Endothelial cell of umbilical vein (primary cell): ENCODE measurements at regions of chr15 and their contacts with region 1.

Region 1: DNA sequence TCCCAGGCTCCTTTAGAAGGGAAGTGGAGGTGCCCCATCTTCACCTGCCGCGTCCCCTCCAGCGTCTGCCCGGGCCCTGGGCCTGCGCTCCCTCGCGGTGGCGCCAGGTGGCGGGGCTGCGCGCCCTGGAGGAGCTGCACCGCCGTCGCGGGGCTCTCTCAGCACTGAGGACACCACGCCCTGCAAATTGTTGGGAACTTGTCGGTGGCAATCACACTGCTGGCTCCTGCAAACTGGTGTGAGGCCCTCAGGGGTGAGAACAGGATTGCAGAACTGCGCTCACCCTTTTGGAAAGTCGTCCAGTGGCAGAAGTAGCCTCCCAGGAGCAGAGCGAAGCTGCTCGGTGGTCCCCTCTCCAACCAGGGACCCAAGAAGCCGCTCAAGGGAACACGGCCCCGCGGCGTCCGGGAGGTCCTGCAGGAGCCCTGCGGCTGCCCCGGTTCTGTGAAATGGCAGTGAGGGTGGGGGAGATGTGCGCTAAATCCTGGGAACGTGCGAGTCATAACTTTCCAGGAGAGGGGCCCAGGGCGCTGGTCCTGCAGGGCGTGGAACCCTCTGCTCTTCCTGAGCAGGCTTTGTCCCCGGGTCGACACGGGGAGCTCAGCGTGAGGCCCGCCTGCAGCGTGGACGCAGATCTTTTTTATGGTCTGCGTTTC is 995 bp upstream of the LRRK1 start:
- DNase-seq: peak; percentile 78
- H3K4me3 ChIP-seq: peak overlapping the region; percentile 50 to 60 (median 58)
- H3K27ac ChIP-seq: peak overlapping the region; percentile 44
- H3K4me1 ChIP-seq: peaks cover 14% of the 10 kb centered on the region
- H3K27me3 ChIP-seq: no peaks in the 10 kb centered on the region
- CTCF ChIP-seq: peak; percentile 90 to 94
- POLR2A ChIP-seq: no peak

Region 2: DNA sequence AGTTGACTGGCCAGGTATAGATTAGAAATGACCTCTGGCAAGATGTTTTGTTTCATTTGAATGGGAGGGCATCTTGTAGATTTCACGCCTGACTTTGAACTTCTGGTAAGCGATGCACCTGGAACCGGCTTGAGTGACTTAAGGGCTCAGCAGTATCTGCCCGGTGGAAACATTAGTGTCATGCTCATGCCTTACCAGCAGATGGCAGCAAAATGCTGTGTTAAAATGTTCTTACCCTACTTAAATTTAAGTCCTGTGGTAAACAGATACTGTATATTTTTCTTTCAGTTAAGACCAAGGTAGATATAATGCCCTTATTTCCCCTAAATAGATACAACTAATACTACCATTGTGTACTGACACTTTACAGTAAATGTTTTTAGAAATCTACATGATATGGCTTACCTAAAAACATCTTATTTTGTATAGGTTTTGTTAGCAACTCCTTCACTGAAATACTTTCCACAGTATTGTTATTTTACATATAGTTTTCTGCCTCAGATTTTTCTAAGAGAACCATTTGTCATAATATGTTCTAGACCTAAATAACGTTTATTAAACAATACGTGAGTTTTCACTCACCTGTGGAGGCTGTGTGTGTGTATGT is 290.3 kb before region 1 on chr15:
- CTCF ChIA-PET with region 1: interaction called, 9 read pairs
- POLR2A ChIA-PET with region 1: no interaction called
- dilution Hi-C with region 1: no loop called
- intact Hi-C with region 1: loop called (anchors 1 kb)
- DNase-seq: peak; percentile 92
- H3K4me3 ChIP-seq: no peak overlapping the region
- H3K27ac ChIP-seq: no peak overlapping the region
- H3K4me1 ChIP-seq: no peaks in the 10 kb centered on the region
- H3K27me3 ChIP-seq: no peaks in the 10 kb centered on the region
- CTCF ChIP-seq: peak; percentile 67 to 76
- POLR2A ChIP-seq: no peak

Region 3: DNA sequence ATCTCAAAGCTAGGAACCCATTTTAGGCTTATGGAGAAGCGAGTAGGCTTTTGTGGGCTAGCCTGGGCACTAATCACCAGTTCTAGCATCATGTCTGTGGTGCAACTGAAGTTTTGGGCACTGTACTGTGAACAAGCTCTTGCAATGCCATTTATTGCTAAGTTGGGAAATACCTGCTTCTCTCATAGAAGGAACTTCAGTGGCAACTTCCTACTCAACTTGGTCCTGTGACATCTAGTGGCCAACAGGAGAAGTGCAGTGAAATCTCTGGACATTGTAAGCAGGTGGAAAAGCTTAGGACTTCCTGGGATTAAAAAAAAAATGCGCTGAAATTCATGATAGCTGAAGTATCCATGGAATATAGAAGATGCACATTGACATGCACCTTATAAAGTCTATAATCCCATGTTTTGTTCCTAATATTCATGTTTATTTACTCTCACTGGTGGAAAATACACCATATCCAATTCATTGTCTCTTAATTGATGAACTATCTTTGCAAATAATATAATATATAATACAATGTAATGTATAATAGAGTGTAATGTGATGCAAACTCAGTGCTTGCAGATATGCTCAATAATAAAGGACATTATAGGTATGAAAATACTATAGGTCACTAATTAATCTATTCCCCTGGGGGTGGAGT is 45.0 kb before region 1 on chr15:
- CTCF ChIA-PET with region 1: interaction called, 35 read pairs
- POLR2A ChIA-PET with region 1: no interaction called
- dilution Hi-C with region 1: no loop called
- intact Hi-C with region 1: no loop called
- DNase-seq: peak; percentile 82
- H3K4me3 ChIP-seq: no peak overlapping the region
- H3K27ac ChIP-seq: no peak overlapping the region
- H3K4me1 ChIP-seq: no peaks in the 10 kb centered on the region
- H3K27me3 ChIP-seq: peaks cover 5 to 6% of the 10 kb centered on the region in 2 experiments
- CTCF ChIP-seq: peak; percentile 73 to 74
- POLR2A ChIP-seq: no peak

Region 4: GRCh38 chr15:100889385-100890050 is 28.6 kb before region 1 on chr15:
- CTCF ChIA-PET with region 1: interaction called, 16 read pairs
- POLR2A ChIA-PET with region 1: interaction called, 4 read pairs
- dilution Hi-C with region 1: no loop called
- intact Hi-C with region 1: loop called (anchors 1 kb)
- DNase-seq: peak; percentile 85
- H3K4me3 ChIP-seq: peak overlapping the region in 1 of 3 experiments; percentile 3
- H3K27ac ChIP-seq: peak overlapping the region; percentile 43
- H3K4me1 ChIP-seq: peaks cover 35% of the 10 kb centered on the region
- H3K27me3 ChIP-seq: no peaks in the 10 kb centered on the region
- CTCF ChIP-seq: no peak
- POLR2A ChIP-seq: peak; percentile 50

Region 5: DNA sequence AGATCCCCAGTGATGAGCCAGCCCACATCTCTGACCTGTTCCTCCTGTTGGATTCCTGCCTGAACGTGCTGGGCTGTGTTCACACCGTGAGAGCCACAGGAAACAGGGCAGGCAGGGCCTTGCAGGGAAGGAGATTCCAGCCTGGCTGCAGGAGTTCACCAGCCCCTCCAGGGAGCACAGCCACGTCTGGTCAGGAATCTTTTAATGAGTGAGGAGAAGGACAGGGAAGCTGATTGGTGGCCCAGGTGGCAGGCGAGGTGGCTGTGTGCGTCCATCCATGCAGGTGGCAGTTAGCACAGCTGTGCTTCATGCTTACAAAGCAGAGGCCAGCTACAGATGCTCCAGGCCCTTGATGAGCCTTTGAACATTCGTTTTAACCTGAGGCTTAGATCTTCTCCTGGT is 11.5 kb after region 1 on chr15:
- CTCF ChIA-PET with region 1: interaction called, 23 read pairs
- POLR2A ChIA-PET with region 1: no interaction called
- dilution Hi-C with region 1: no loop called
- intact Hi-C with region 1: no loop called
- DNase-seq: no peak
- H3K4me3 ChIP-seq: no peak overlapping the region
- H3K27ac ChIP-seq: no peak overlapping the region
- H3K4me1 ChIP-seq: peaks cover 7% of the 10 kb centered on the region
- H3K27me3 ChIP-seq: no peaks in the 10 kb centered on the region
- CTCF ChIP-seq: no peak
- POLR2A ChIP-seq: no peak

Region 6: GRCh38 chr15:100958326-100959065 is 40.3 kb after region 1 on chr15:
- CTCF ChIA-PET with region 1: interaction called, 15 read pairs
- POLR2A ChIA-PET with region 1: no interaction called
- dilution Hi-C with region 1: no loop called
- intact Hi-C with region 1: loop called (anchors 1 kb)
- DNase-seq: peak; percentile 50
- H3K4me3 ChIP-seq: no peak overlapping the region
- H3K27ac ChIP-seq: peak overlapping the region; percentile 88
- H3K4me1 ChIP-seq: peaks cover 16% of the 10 kb centered on the region
- H3K27me3 ChIP-seq: no peaks in the 10 kb centered on the region
- CTCF ChIP-seq: no peak
- POLR2A ChIP-seq: no peak

Region 7: DNA sequence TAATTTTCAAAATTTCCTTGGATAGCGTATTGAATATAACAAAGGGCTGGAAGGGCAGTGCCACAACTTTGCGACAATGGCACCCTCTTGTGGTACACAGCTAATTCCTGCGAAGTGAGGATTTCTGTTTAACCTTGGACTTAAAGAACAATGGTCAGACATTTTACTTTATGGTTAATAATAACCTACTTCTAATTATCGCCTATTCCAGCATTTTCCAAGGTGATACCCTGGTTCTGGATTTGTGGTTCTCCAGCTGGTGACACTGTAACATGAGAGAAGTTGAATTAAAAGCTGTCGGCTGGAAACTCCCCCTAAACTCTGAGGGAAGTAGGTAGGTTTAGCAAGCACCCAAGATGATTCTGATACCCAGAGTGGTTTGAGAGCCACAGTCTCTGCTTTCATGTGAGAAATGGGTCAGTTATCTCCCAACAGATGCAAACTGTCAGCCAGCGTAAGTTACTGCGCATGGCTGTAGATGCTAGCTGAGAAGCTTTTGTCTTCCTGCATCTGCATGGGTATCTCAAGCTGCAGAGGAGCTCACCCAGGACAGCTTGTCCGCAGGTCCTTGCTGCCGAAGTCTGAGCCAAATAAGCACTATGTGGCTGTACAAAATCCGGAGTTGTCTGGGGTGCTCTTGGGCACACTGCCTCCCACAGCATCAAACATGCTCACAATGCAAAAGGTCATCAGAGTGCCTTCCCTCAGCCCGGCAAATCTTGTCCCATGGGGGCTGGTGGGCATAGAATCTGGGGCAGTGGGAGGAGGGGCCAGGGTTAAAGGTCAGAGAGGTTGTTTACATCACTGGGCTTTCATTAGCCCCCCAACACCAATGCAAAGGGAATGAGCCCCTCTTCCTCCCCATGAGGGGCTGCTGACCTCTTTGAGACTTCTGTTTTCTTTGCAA is 340.3 kb after region 1 on chr15:
- CTCF ChIA-PET with region 1: interaction called, 14 read pairs
- POLR2A ChIA-PET with region 1: no interaction called
- dilution Hi-C with region 1: no loop called
- intact Hi-C with region 1: loop called (anchors 1 kb)
- DNase-seq: peak; percentile 80
- H3K4me3 ChIP-seq: no peak overlapping the region
- H3K27ac ChIP-seq: no peak overlapping the region
- H3K4me1 ChIP-seq: peaks cover 11% of the 10 kb centered on the region
- H3K27me3 ChIP-seq: peaks cover 0 to 2% of the 10 kb centered on the region in 2 experiments
- CTCF ChIP-seq: peak; percentile 66 to 88
- POLR2A ChIP-seq: no peak